ENCODE measurements at regions of chr1 and their contacts with region 1.

Region 1: GRCh38 chr1:11907275-11908094 is 18.7 kb downstream of the KIAA2013 start:
- DNase-seq: peak; percentile 91 to 97
- ATAC-seq: peak; percentile 60 to 84 (median 70)
- H3K4me3 ChIP-seq: no peak overlapping the region
- H3K4me3 Mint-ChIP-seq: peak overlapping the region; percentile 98
- H3K27ac ChIP-seq: peak overlapping the region; percentile 88
- H3K27ac Mint-ChIP-seq: peak overlapping the region; percentile 99 to 100
- H3K4me1 ChIP-seq: peaks cover 20% of the 10 kb centered on the region
- H3K4me1 Mint-ChIP-seq: peaks cover 35 to 36% of the 10 kb centered on the region in 2 donors
- H3K27me3 ChIP-seq: no peaks in the 10 kb centered on the region
- H3K27me3 Mint-ChIP-seq: no peaks in the 10 kb centered on the region
- CTCF ChIP-seq: peak; percentile 81

Region 2: DNA sequence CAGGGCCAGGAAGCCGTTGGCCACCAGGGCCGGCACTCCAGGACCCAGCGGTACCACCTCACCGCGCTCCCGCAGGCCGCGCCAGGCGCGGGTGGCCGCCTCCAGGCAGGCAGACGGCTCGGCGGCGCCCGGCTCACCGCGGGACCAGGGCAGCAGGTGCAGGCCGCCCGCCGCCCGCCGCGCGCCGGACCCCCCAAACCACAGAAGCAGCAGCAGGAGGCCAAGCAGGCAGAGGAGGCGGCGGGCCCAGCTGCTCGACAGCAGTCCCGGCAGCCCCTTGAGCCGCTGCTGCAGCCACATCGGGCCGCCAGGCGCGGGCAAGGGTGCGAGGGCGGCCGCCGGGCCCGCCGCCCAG is 18.4 kb after region 1 on chr1:
- intact Hi-C with region 1: loop called (anchors 1 kb)
- DNase-seq: no peak
- ATAC-seq: peak; percentile 34 to 47 (median 47)
- H3K4me3 ChIP-seq: peak overlapping the region; percentile 22
- H3K4me3 Mint-ChIP-seq: no peak overlapping the region
- H3K27ac ChIP-seq: no peak overlapping the region
- H3K27ac Mint-ChIP-seq: peak overlapping the region; percentile 63 to 65
- H3K4me1 ChIP-seq: peaks cover 40% of the 10 kb centered on the region
- H3K4me1 Mint-ChIP-seq: peaks cover 22 to 31% of the 10 kb centered on the region in 2 donors
- H3K27me3 ChIP-seq: no peaks in the 10 kb centered on the region
- H3K27me3 Mint-ChIP-seq: no peaks in the 10 kb centered on the region
- CTCF ChIP-seq: no peak

Measured in natural killer cell (primary cell).